ENCODE measurements at regions of chr2 and their contacts with region 1.

Region 1: GRCh38 chr2:145032791-145033190 is 512.9 kb upstream of the ZEB2 start:
- DNase-seq: no peak
- H3K4me3 ChIP-seq: no peak overlapping the region
- H3K27ac ChIP-seq: no peak overlapping the region
- H3K4me1 ChIP-seq: no peaks in the 10 kb centered on the region
- H3K27me3 ChIP-seq: no peaks in the 10 kb centered on the region
- CTCF ChIP-seq: no peak
- POLR2A ChIP-seq: no peak

Region 2: DNA sequence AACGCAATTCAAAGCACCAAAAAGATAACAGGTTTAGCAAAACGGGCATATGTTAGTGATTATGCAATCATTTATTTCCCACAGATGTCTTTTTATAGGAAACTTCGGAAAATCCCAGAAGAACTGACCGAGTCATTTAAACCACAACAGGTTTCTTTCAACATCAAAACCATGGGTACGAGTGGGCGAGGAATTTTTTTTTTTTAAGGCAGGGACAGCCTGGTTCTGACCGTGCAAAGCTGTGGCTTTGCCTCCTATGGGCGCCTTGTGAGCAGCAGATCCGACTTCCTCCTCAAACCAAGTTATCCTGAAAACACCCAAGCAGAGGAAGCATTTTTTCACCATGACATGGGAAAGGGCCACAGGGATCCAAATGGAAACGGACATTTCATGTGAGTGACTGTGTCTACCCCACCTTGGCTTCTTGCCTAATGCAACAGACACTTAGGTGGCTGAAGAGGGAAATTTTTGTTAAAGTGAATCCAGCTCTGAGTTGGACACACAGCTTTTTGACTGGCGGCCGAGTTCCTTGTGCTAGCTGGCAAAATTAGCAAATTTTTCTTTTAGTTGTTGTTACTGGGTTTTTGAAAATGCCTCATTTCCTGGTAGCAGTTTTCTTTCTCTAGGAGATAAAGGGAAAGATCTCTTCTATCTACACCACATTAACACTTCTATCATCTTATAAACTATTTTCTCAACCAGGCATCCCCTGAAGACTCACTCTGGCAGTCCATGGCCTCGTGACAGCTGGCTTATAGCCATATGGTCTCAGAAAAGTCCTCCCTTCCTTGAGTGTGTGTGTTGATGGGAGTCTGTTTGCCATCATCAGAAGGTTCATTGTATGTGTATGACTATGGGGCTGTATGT is 25.5 kb before region 1 on chr2:
- CTCF ChIA-PET with region 1: no interaction called
- POLR2A ChIA-PET with region 1: no interaction called
- dilution Hi-C with region 1: no loop called
- intact Hi-C with region 1: no loop called
- DNase-seq: peak; percentile 91
- H3K4me3 ChIP-seq: peak overlapping the region in 1 of 3 experiments; percentile 3
- H3K27ac ChIP-seq: peak overlapping the region; percentile 80
- H3K4me1 ChIP-seq: peaks cover 38% of the 10 kb centered on the region
- H3K27me3 ChIP-seq: no peaks in the 10 kb centered on the region
- CTCF ChIP-seq: no peak
- POLR2A ChIP-seq: no peak

Region 3: GRCh38 chr2:145055651-145056050 is 22.9 kb after region 1 on chr2:
- CTCF ChIA-PET with region 1: no interaction called
- POLR2A ChIA-PET with region 1: no interaction called
- dilution Hi-C with region 1: no loop called
- intact Hi-C with region 1: loop called (anchors 1 kb)
- DNase-seq: no peak
- H3K4me3 ChIP-seq: no peak overlapping the region
- H3K27ac ChIP-seq: no peak overlapping the region
- H3K4me1 ChIP-seq: no peaks in the 10 kb centered on the region
- H3K27me3 ChIP-seq: no peaks in the 10 kb centered on the region
- CTCF ChIP-seq: no peak
- POLR2A ChIP-seq: no peak

Region 4: DNA sequence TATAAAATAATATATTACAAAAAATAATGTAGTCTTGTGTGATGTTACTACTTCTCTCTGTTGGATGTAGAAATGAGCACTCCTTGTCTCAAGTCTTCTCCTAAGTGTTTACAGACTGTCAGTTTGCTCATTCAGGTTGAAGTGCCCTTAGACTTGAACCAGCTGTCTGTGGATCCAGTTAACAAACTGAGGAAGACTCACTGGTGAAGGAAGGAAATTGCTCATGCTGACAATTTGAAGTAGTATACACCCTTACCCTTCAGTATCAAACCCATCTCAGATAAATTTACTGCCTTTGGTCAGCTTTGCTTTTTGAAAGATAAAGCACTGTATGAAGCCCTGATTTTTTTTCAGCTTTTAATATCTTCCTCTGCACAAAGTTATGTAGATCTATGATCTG is 341.4 kb after region 1 on chr2:
- CTCF ChIA-PET with region 1: no interaction called
- POLR2A ChIA-PET with region 1: no interaction called
- dilution Hi-C with region 1: no loop called
- intact Hi-C with region 1: no loop called
- DNase-seq: peak; percentile 13
- H3K4me3 ChIP-seq: no peak overlapping the region
- H3K27ac ChIP-seq: no peak overlapping the region
- H3K4me1 ChIP-seq: no peaks in the 10 kb centered on the region
- H3K27me3 ChIP-seq: no peaks in the 10 kb centered on the region
- CTCF ChIP-seq: no peak
- POLR2A ChIP-seq: no peak

Measured in endothelial cell of umbilical vein (primary cell).